PC-9 (cell line): ENCODE measurements at regions of chr12 and their contacts with region 1.

Region 1: DNA sequence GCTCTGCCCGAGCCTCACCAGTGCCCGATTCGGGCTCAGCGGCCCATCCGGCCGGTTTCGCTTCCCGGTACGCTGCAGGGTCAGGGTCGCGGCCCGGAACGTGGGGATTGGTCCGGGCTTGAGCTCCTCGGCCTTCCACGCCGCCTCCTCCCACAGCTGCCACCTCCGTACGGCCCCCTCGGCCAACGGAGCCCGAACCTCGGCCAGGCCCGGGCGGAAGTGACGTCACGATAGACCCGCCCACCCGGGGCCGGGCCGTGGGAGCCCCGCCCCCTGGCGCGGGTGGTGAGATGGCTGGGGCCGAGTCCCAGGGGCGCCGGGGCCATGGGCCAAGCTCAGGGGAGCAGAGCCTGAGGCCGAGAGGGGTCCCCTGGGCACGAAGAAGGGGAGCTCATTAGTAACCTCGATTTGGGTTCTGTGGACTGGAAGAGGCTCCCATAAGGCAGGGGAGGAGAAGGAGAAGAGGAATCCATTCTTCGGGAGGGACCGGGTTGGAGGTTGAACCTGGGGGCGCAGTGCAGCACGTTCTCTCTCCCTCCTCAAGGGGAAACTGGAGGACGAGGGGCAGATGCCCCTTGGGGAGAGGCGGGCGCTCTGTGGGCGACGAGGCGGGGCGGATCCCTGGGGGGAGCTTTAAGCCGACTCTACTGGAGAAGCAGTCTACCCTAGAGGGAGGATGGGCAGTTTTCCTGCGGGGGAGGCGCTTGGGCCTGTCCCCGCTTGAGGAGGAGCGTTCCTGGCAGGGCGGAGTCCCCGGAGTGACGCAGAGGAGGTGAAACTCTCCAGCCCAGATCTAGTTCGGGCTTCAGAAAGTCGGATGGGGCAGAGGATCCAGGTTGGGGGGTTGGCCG is at the start of gene MLF2:
- DNase-seq: peak; percentile 95 to 100
- H3K4me3 ChIP-seq: peak within 1 kb of the TSS; percentile 77
- H3K27ac ChIP-seq: peak within 1 kb of the TSS; percentile 83
- H3K4me1 ChIP-seq: peaks cover 16% of the 10 kb centered on the region
- H3K27me3 ChIP-seq: no peaks in the 10 kb centered on the region
- CTCF ChIP-seq: no peak; the same call in 1 of the 2 replicates
- total RNA-seq, gene MLF2: 349 and 379 TPM in 2 replicates

Region 2: GRCh38 chr12:6582196-6582595 is 170.9 kb before region 1 on chr12:
- CTCF ChIA-PET with region 1: no interaction called
- POLR2A ChIA-PET with region 1: no interaction called
- intact Hi-C with region 1: no loop called
- DNase-seq: peak in 1 of 2 experiments; percentile 33
- H3K4me3 ChIP-seq: no peak overlapping the region
- H3K27ac ChIP-seq: no peak overlapping the region
- H3K4me1 ChIP-seq: 0 out of 2 replicates have a peak, but pooled peaks cover 3% of the 10 kb centered on the region
- H3K27me3 ChIP-seq: no peaks in the 10 kb centered on the region
- CTCF ChIP-seq: no peak

Region 3: DNA sequence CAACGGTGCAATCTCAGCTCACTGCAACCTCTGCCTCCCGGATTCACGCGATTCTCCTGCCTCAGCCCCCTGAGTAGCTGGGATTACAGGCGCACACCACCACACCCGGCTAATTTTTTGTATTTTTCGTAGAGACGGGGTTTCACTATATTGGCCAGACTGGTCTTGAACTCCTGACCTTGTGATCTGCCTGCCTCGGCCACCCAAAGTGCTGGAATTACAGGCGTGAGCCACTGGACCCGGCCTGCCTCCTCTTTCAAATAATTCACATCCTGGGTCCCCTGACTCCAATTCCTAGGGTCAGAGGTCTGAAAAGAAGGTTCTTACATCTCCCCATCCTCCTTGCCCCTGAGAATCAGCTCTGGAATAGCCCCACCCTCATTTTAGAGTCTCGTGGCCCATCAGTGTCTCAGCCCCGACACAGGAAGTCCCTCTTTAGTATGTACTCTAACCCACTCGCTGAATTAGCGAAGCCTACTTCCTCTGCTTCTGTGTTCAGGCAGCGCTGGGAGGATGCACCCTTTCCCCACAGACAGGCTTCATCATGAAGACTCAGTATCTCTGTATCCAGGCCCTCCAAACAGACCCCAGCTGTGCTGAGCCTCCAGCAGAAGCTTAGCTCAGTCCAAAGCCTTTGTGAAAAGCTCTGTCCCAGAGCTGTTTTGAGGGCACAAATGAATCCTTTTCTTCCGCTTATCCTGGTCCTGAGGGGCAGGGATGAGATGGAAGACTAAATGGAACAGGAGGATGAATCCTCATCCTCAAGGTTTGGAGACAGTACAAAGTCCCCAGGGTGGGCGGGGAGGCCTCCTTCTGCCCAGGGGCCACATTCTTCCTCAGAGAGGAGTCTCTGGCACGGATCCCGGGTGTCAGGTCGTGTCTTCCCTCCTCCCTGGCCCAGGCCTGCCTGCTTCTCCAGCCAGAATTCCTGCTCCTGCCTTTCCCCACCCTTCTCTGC is 120.8 kb before region 1 on chr12:
- CTCF ChIA-PET with region 1: no interaction called
- POLR2A ChIA-PET with region 1: no interaction called
- intact Hi-C with region 1: loop called (anchors 1 kb)
- DNase-seq: peak in 1 of 2 experiments; percentile 17
- H3K4me3 ChIP-seq: no peak overlapping the region
- H3K27ac ChIP-seq: no peak overlapping the region
- H3K4me1 ChIP-seq: peaks cover 22% of the 10 kb centered on the region
- H3K27me3 ChIP-seq: no peaks in the 10 kb centered on the region
- CTCF ChIP-seq: no peak

Region 4: DNA sequence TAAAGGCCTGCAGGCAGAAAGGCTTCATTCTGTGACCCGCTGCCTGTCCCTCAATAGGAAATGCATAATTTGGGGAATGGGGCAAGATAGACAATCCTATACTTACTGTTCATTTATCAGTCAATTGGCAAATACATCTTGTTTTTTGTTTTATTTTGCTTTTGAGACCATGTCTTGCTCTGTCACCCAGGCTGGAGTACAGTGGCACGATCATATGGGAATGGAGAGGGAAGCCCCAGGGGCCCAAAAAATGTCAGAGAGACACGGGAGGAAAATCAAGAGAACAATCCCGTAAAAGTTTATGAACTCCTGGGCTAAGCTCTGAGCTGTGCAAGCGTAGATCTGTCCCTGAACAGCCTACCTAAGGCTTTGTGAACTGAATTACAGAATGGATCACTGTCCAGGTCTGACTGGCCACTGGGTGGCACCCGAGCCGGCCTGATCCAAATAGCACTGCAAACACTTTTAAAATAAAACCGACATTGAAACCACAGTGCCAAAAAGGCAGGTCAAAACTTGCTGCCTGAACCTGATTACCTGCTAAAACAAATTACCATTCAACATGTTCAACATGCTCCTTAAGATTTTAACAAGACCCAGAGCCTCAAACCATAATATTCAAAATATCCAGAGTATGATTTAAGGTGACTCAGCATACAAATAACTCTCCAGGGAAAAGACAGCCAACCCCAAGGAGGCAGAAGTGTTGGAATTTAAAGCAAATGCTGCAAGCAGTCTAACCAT is 17.5 kb before region 1 on chr12:
- CTCF ChIA-PET with region 1: interaction called, 14 read pairs
- POLR2A ChIA-PET with region 1: no interaction called
- intact Hi-C with region 1: no loop called
- DNase-seq: peak; percentile 44 to 70
- H3K4me3 ChIP-seq: no peak overlapping the region
- H3K27ac ChIP-seq: no peak overlapping the region
- H3K4me1 ChIP-seq: no peaks in the 10 kb centered on the region; the same call in 1 of the 2 replicates
- H3K27me3 ChIP-seq: no peaks in the 10 kb centered on the region
- CTCF ChIP-seq: peak; percentile 84

Region 5: GRCh38 chr12:6778574-6779550 is 25.7 kb after region 1 on chr12:
- CTCF ChIA-PET with region 1: interaction called, 10 read pairs
- POLR2A ChIA-PET with region 1: interaction called, 17 read pairs
- intact Hi-C with region 1: loop called (anchors 1 kb)
- DNase-seq: peak; percentile 86 to 98
- H3K4me3 ChIP-seq: peak overlapping the region; percentile 47; the same call in 1 of the 2 replicates
- H3K27ac ChIP-seq: no peak overlapping the region
- H3K4me1 ChIP-seq: no peaks in the 10 kb centered on the region
- H3K27me3 ChIP-seq: no peaks in the 10 kb centered on the region
- CTCF ChIP-seq: peak; percentile 98

Region 6: GRCh38 chr12:6839482-6840201 is 86.5 kb after region 1 on chr12:
- CTCF ChIA-PET with region 1: interaction called, 5 read pairs
- POLR2A ChIA-PET with region 1: interaction called, 6 read pairs
- intact Hi-C with region 1: loop called (anchors 1 kb)
- DNase-seq: peak; percentile 58 to 60
- H3K4me3 ChIP-seq: no peak overlapping the region
- H3K27ac ChIP-seq: no peak overlapping the region
- H3K4me1 ChIP-seq: no peaks in the 10 kb centered on the region
- H3K27me3 ChIP-seq: no peaks in the 10 kb centered on the region; the same call in 1 of the 2 replicates
- CTCF ChIP-seq: peak; percentile 56; the same call in 1 of the 2 replicates

Region 7: GRCh38 chr12:6937481-6938297 is 184.5 kb after region 1 on chr12:
- CTCF ChIA-PET with region 1: no interaction called
- POLR2A ChIA-PET with region 1: interaction called, 14 read pairs
- intact Hi-C with region 1: loop called (anchors 5 kb)
- DNase-seq: peak; percentile 92 to 97
- H3K4me3 ChIP-seq: peak overlapping the region; percentile 62
- H3K27ac ChIP-seq: peak overlapping the region; percentile 52
- H3K4me1 ChIP-seq: peaks cover 8% of the 10 kb centered on the region
- H3K27me3 ChIP-seq: no peaks in the 10 kb centered on the region
- CTCF ChIP-seq: peak; percentile 98